Right cardiac atrium (tissue), 5 donors: ENCODE measurements at regions of chr9 and their contacts with region 1.

Region 1: DNA sequence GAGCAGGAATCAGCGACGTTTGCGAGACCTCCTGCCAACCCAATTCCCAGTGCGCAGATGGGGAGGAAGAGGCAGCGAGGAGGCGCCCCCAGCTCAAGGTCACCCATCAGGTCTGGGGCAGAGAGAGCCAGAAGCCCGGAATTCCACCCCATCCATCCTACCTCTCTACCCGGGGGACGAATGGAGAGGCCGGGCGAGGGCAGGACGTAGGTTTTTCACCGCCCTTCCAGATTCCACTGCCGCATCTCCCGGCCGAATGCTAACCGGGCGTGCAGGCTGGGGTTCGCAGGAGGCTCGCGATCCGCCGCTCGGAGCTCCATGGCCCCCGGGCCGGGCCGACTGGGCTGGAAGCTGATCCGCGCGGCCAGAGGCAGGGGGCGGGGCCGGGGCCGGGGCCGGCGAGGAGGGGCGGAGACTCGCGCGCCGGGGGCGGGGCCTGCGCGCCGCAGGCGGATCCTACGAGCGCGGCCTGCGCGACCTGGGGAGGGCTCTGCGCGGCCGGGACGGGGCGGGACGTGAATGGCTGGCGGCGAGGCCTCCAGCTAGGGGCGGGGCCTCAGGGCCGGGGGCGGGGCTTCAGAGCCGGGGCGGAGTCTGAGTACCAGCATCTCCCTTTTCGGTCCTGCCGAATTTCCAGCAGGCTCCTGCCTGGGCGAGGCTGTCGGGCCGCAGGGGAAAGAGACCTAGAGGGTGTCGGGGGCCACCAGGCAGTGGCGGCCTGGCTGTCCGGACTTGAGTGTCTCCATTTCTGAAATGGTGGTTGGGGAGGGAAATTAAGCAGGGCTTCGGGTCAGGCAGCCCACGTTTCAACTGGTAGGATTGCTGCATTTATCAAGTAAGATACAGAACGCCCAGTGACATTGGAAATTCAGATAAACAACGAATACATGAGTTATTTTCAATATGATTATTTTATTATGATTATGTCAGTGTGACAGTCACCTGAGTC is at the start of gene ST6GALNAC4:
- DNase-seq: peak; percentile 95 to 99 (median 98)
- ATAC-seq: peak; percentile 87 to 95
- H3K4me3 ChIP-seq: peak within 1 kb of the TSS; percentile 65
- H3K27ac ChIP-seq: peak within 1 kb of the TSS; percentile 77
- H3K4me1 ChIP-seq: peaks cover 15% of the 10 kb centered on the region
- H3K27me3 ChIP-seq: no peaks in the 10 kb centered on the region
- total RNA-seq, gene ST6GALNAC4: 26.3 to 36.7 (median 32.3) TPM

Region 2: GRCh38 chr9:127503947-127504782 is 412.8 kb before region 1 on chr9:
- intact Hi-C with region 1: loop called in 2 of 4 experiments (anchors 10 kb)
- DNase-seq: peak; percentile 88 to 97 (median 95)
- ATAC-seq: peak; percentile 78 to 79
- H3K4me3 ChIP-seq: no peak overlapping the region
- H3K27ac ChIP-seq: no peak overlapping the region
- H3K4me1 ChIP-seq: no peaks in the 10 kb centered on the region
- H3K27me3 ChIP-seq: no peaks in the 10 kb centered on the region

Region 3: GRCh38 chr9:127586537-127586936 is 330.4 kb before region 1 on chr9:
- intact Hi-C with region 1: loop called (anchors 5 kb)
- DNase-seq: peak; percentile 82 to 90 (median 87)
- ATAC-seq: peak; percentile 90
- H3K4me3 ChIP-seq: no peak overlapping the region
- H3K27ac ChIP-seq: no peak overlapping the region
- H3K4me1 ChIP-seq: no peaks in the 10 kb centered on the region
- H3K27me3 ChIP-seq: no peaks in the 10 kb centered on the region

Region 4: DNA sequence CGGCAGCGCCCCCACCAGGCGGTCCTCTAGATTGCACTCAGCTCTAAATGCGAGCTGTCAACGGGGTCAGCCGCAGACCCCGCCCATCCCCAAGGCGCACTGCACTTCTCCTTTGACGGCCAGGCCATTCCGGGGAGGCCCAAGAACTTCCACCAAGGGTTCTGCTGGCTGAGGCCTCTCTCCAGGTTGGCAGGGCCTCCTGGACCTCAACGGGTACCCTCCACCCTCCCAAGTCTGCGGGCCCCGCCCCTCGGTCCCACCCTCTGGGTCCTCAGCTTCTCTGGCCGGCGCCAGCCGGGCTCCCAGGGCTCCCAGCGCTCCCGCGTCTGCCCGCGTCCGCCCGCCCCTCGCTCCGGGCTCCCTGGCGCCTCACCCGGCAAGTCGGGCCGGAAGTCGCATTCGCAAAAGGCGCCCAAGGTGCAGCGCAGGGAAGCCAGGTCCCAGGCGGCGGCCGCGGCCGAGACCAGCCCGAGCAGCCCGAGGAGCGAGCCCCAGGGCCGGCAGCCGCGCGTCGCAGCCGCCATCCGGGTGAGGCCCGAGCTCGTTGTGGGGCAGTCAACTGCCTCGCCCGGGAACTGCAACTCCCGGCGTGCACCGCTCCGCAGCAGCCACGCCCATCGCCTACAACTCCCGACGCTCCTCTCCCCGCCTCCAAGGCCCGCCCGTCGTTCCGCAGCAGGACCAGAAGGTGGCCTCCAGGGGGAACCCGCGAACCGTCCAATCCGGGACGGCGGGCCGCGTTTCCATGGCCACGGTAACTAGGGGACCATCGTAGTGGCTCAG is 182.0 kb before region 1 on chr9 and contains the start of gene TOR2A:
- intact Hi-C with region 1: loop called (anchors 2 to 10 kb)
- DNase-seq: peak; percentile 99
- ATAC-seq: peak; percentile 95 to 96
- H3K4me3 ChIP-seq: peak within 1 kb of the TSS; percentile 66
- H3K27ac ChIP-seq: peak within 1 kb of the TSS; percentile 90
- H3K4me1 ChIP-seq: peaks cover 6% of the 10 kb centered on the region
- H3K27me3 ChIP-seq: no peaks in the 10 kb centered on the region
- total RNA-seq, gene TOR2A: 3.1 to 3.9 (median 3.5) TPM

Region 5: GRCh38 chr9:127754099-127755050 is 162.6 kb before region 1 on chr9:
- intact Hi-C with region 1: no loop called
- DNase-seq: peak in 1 of 3 donors; percentile 52
- ATAC-seq: peak; percentile 27 to 38
- H3K4me3 ChIP-seq: peak overlapping the region; percentile 32
- H3K27ac ChIP-seq: no peak overlapping the region
- H3K4me1 ChIP-seq: no peaks in the 10 kb centered on the region
- H3K27me3 ChIP-seq: no peaks in the 10 kb centered on the region

Region 6: DNA sequence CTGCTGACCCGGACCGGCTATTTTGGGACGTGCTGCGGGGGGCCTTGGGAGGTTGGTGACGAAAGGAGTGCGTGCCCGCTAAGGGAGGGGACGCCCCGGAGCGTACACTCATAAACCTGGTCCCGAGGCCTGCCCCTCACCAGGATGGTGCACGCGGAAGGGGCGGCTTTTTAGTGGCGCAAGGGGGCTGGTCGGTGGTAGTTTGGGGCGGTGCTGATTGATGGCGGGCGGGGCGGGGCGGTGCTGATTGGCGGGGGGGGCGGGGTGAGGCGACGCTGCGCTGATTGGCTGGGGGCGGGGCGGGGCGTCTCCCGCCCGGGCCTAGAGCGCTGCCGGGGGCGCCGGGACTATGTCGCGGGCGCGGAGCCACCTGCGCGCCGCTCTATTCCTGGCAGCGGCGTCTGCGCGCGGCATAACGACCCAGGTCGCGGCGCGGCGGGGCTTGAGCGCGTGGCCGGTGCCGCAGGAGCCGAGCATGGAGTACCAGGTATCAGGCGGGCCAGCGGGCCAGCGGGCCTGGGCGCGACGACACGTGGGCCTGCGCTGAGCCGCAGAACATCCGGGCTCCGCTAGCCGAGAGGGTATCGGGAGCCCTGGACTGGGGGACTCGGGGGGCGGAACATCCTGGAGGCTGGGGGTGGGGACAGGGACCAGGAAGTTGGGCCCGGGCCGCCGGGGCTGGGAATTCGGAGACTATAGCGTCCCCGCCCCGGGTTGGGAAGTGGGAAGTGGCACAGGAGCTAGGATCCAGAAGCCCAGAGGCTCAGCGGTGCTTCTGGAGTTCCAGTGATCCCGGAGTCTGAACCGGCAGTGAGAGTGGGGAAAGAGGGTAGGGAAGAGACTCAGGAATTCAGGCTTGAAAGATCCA is 114.1 kb before region 1 on chr9 and contains the start of gene FPGS:
- intact Hi-C with region 1: loop called in 1 of 4 experiments (anchors 5 kb)
- DNase-seq: peak; percentile 95 to 97 (median 96)
- ATAC-seq: peak; percentile 92 to 94
- H3K4me3 ChIP-seq: peak within 1 kb of the TSS; percentile 87
- H3K27ac ChIP-seq: peak within 1 kb of the TSS; percentile 97
- H3K4me1 ChIP-seq: peaks cover 4% of the 10 kb centered on the region
- H3K27me3 ChIP-seq: no peaks in the 10 kb centered on the region
- total RNA-seq, gene FPGS: 34.1 to 53.1 (median 45.6) TPM

Region 7: GRCh38 chr9:127877566-127877998 is 39.4 kb before region 1 on chr9 and contains the start of gene AK1:
- intact Hi-C with region 1: loop called in 2 of 4 experiments (anchors 2 to 5 kb)
- DNase-seq: peak; percentile 87 to 95 (median 94)
- ATAC-seq: peak; percentile 79
- H3K4me3 ChIP-seq: peak within 1 kb of the TSS; percentile 80
- H3K27ac ChIP-seq: peak within 1 kb of the TSS; percentile 86
- H3K4me1 ChIP-seq: peaks cover 12% of the 10 kb centered on the region
- H3K27me3 ChIP-seq: no peaks in the 10 kb centered on the region
- total RNA-seq, gene AK1: 630 to 722 (median 659) TPM

Region 8: DNA sequence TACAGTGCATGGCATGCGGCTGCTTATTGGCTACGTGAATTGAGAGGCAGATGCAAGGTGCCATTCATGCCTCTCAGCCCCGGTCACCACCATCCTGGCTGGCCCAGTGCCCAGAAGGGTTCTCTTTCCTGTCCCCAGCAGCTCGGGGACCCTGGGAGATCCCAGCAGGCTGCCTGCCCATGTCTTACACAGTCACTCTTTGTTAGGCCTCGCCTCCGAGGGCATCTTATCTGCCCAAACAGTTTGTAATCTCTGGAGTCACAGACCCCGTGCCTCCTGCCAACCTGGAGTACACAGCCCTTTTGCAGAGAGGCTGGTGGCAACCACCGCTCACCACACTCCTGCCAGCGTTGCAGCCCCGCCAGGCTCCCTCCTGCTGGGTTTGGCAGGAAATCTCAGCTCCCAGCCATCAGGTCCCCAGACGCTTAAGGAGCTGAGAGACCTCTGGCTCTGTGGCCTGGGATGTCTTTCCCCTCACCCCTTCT is 32.5 kb before region 1 on chr9:
- intact Hi-C with region 1: loop called in 1 of 4 experiments (anchors 5 kb)
- DNase-seq: peak; percentile 65 to 85 (median 79)
- ATAC-seq: peak; percentile 32 to 60
- H3K4me3 ChIP-seq: no peak overlapping the region
- H3K27ac ChIP-seq: peak overlapping the region; percentile 2
- H3K4me1 ChIP-seq: peaks cover 8% of the 10 kb centered on the region
- H3K27me3 ChIP-seq: no peaks in the 10 kb centered on the region